HepG2 (cell line): ENCODE measurements at regions of chr20 and their contacts with region 1.

Region 1: GRCh38 chr20:57391074-57391554 is at the start of gene RBM38:
- DNase-seq: peak; percentile 56
- ATAC-seq: peak; percentile 72
- H3K4me3 ChIP-seq: peak within 1 kb of the TSS; percentile 76 to 97 (median 96)
- H3K27ac ChIP-seq: peak within 1 kb of the TSS; percentile 58
- H3K4me1 ChIP-seq: peaks cover 37% of the 10 kb centered on the region
- H3K27me3 ChIP-seq: no peaks in the 10 kb centered on the region
- CTCF ChIP-seq: no peak
- EP300 ChIP-seq: no peak
- POLR2A ChIP-seq: peak in 1 of 2 experiments; percentile 46; a peak in 2 of 4 replicates
- RAD21 ChIP-seq: no peak
- total RNA-seq, gene RBM38: 29.6 and 34.2 TPM in 2 replicates

Region 2: GRCh38 chr20:56945059-56945458 is 446.1 kb before region 1 on chr20:
- CTCF ChIA-PET with region 1: no interaction called
- POLR2A ChIA-PET with region 1: no interaction called
- in situ Hi-C with region 1: no loop called
- intact Hi-C with region 1: no loop called
- DNase-seq: no peak
- ATAC-seq: no peak
- H3K4me3 ChIP-seq: no peak overlapping the region
- H3K27ac ChIP-seq: no peak overlapping the region
- H3K4me1 ChIP-seq: no peaks in the 10 kb centered on the region
- H3K27me3 ChIP-seq: peaks cover 12 to 67% of the 10 kb centered on the region in 2 experiments; a peak in 4 of 5 replicates
- CTCF ChIP-seq: no peak
- EP300 ChIP-seq: no peak
- POLR2A ChIP-seq: no peak
- RAD21 ChIP-seq: no peak

Region 3: GRCh38 chr20:57429580-57430200 is 38.6 kb after region 1 on chr20:
- CTCF ChIA-PET with region 1: no interaction called
- POLR2A ChIA-PET with region 1: interaction called, 8 read pairs
- in situ Hi-C with region 1: no loop called
- intact Hi-C with region 1: loop called (anchors 2 kb)
- DNase-seq: peak; percentile 69
- ATAC-seq: peak; percentile 10
- H3K4me3 ChIP-seq: no peak overlapping the region
- H3K27ac ChIP-seq: no peak overlapping the region
- H3K4me1 ChIP-seq: peaks cover 58% of the 10 kb centered on the region
- H3K27me3 ChIP-seq: peaks cover 0 to 31% of the 10 kb centered on the region in 2 experiments
- CTCF ChIP-seq: no peak
- EP300 ChIP-seq: no peak
- POLR2A ChIP-seq: no peak
- RAD21 ChIP-seq: no peak

Region 4: DNA sequence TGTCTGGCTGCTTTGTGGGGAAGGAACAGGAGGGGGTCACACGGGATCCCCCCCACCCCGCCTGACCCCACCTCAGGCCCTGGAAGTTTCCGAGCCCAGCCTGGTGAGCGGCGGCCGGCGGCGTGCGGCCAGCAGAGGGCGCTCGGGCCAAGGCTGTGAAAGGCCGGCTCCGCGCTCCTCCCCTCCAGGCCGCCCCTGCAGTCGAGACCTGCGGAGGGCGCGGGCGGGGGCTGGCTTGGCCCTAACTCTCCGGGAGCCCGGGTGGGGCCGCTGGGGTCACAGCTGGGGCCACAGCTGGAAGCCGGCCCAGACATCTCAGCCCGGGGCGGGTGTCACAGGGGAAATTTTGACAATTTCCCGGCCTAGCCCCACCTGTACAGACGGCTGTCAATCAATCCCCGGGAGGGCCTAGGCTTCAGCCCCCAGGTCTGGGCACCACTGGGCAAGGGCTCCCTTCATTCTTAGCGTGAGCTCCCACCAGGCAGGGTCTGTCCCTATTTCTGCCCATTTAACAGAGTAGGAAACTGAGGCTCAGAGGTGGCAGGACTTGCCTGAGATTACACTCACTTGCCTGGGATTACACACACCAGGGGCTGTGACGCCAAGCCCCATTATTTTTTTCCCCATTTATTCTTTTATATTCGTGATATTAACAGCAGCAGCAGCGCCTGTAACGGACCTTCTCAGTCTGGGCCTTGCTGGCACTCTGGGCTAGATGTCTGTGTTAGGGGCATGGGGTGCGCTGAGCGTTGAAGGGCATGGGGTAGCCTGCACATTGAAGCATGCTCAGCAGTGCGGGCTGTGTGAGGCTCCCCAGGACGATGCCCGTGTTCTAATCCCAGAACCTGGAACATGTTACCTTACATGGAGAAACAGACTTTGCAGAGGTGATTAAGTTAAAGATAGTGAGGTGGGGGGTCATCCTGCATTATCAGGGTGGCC is 206.2 kb after region 1 on chr20:
- CTCF ChIA-PET with region 1: no interaction called
- POLR2A ChIA-PET with region 1: no interaction called
- in situ Hi-C with region 1: no loop called
- intact Hi-C with region 1: no loop called
- DNase-seq: peak; percentile 43
- ATAC-seq: peak; percentile 75
- H3K4me3 ChIP-seq: peak overlapping the region in 1 of 3 experiments; percentile 27; a peak in 1 of 6 replicates
- H3K27ac ChIP-seq: no peak overlapping the region
- H3K4me1 ChIP-seq: peaks cover 25% of the 10 kb centered on the region
- H3K27me3 ChIP-seq: peaks cover 0 to 36% of the 10 kb centered on the region in 2 experiments; a peak in 4 of 5 replicates
- CTCF ChIP-seq: peak; percentile 98
- EP300 ChIP-seq: 0 out of 4 replicates have a peak, but pooled peaks of 1 of the 2 experiments have one; percentile 16
- POLR2A ChIP-seq: no peak
- RAD21 ChIP-seq: peak; percentile 97